ENCODE measurements at regions of chr6 and their contacts with region 1.

Region 1: DNA sequence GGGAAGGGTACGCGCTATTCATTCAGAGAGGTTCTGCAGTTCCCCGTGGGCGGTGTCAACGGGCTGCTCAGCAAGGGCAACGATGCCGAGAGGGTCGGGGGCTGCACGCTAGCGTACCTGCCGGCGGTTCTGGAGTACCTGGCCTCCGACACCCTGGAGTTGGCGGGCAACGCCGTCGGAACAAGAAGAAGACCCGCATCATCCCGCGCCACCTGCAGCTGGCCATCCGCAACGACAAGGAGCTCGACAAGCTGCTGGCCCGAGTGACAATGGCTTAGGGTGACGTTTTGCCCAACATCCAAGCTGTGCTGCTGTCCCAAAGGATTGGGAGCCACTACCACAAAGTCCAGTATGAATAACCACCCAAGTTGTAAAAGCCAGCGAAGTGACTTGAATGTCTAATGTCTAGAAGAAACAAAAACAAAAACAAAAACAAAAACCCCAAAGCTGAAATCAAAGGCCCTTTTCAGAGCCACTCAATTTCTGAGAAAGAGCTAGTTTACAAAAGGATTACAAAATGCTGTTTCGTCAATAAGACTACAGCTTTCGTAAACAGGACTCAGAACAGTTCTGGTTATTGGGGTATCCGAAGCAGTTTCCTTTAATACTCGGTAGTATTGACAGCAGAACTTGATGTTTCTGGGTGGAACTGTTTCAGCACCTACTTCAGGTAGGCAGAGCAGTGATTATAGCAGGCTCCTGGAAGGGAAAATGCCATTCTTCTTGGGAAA is 21.9 kb upstream of the SLC17A4 start:
- DNase-seq: no peak
- ATAC-seq: no peak
- H3K4me3 ChIP-seq: no peak overlapping the region
- H3K27ac ChIP-seq: no peak overlapping the region
- H3K4me1 ChIP-seq: no peaks in the 10 kb centered on the region
- H3K27me3 ChIP-seq: no peaks in the 10 kb centered on the region
- CTCF ChIP-seq: no peak
- POLR2A ChIP-seq: no peak
- RAD21 ChIP-seq: no peak

Region 2: GRCh38 chr6:25623879-25624278 is 108.8 kb before region 1 on chr6:
- CTCF ChIA-PET with region 1: no interaction called
- POLR2A ChIA-PET with region 1: no interaction called
- RAD21 ChIA-PET with region 1: no interaction called
- intact Hi-C with region 1: no loop called
- DNase-seq: no peak
- ATAC-seq: no peak
- H3K4me3 ChIP-seq: no peak overlapping the region
- H3K27ac ChIP-seq: no peak overlapping the region
- H3K4me1 ChIP-seq: no peaks in the 10 kb centered on the region
- H3K27me3 ChIP-seq: no peaks in the 10 kb centered on the region
- CTCF ChIP-seq: no peak
- POLR2A ChIP-seq: no peak
- RAD21 ChIP-seq: no peak

Region 3: DNA sequence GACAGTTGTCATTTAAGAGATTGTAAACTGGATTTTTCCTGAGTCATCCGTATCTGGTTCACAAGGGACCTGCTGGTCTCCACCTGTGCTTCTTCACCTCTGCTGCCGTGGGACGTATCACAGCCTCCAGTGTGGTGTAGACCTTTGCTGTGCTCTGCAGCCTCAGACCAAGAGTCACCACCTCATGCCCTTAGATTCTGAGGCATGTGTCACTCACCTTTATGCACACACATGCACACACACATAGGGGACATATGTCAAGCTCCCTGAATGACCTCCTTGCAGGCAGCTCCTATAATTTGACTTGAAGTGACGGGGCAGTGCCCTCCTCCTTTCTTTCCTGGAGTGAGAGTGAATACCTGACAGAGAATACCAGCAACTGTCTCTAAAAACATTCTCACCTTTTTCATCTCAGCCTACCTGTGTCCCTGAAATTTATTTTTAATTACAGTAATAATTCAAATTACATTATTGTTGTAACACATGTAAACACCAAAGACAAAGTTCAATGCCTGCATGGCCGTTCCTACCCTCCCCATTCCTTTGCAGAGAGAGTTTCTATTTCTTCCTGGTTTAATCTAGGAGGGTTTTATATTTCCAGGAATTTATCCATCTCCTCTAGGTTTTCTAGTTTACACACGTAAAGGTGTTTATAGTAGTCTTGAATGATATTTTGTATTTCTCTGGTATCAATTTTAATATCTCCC is 25.5 kb after region 1 on chr6:
- CTCF ChIA-PET with region 1: no interaction called
- POLR2A ChIA-PET with region 1: no interaction called
- RAD21 ChIA-PET with region 1: no interaction called
- intact Hi-C with region 1: loop called (anchors 2 kb)
- DNase-seq: no peak
- ATAC-seq: no peak
- H3K4me3 ChIP-seq: no peak overlapping the region
- H3K27ac ChIP-seq: no peak overlapping the region
- H3K4me1 ChIP-seq: no peaks in the 10 kb centered on the region
- H3K27me3 ChIP-seq: no peaks in the 10 kb centered on the region
- CTCF ChIP-seq: no peak
- POLR2A ChIP-seq: no peak
- RAD21 ChIP-seq: no peak